Cardiac septum (tissue), 1 donor: ENCODE measurements at regions of chr19 and their contacts with region 1.

Region 1: DNA sequence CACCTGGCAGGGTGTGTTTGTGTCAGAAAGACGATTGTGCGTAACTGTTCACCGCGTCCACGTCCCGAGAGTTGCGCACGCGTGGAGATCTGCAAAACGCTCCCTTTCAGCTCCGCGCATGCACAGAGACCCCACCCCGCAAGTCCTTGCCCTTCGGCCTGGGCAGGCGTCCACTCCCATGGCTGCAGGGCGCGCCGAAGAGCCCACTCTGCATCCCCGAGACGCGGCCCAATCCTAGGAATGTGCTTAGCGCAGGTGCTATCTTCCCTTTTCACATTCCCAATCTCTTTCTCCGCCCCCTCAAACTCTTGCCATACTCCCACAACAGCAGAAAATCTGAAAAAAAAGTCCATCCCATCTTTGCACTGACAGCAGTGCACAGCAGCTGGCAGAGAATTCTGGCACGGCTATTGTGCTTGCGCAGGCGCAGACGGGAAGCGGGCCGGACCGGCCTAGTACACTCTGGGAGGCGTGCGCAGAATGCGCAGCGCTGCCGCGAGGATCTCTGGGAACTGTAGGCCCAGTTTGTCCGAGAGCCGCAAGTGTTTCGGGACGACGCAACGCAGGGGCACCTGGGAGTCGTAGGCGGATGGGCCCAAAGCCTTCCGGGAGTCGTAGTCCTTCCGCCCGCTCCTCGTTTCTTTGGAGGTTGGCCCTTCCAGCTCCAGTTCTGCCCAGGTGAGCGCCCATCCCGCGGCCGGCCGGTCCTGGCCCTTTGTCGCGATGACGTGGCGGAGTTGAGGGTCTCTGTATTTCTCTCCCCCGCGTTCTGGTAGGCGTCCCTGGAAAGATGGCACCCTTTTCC is 23.1 kb downstream of the ZNF175 start:
- DNase-seq: peak; percentile 100

Region 2: DNA sequence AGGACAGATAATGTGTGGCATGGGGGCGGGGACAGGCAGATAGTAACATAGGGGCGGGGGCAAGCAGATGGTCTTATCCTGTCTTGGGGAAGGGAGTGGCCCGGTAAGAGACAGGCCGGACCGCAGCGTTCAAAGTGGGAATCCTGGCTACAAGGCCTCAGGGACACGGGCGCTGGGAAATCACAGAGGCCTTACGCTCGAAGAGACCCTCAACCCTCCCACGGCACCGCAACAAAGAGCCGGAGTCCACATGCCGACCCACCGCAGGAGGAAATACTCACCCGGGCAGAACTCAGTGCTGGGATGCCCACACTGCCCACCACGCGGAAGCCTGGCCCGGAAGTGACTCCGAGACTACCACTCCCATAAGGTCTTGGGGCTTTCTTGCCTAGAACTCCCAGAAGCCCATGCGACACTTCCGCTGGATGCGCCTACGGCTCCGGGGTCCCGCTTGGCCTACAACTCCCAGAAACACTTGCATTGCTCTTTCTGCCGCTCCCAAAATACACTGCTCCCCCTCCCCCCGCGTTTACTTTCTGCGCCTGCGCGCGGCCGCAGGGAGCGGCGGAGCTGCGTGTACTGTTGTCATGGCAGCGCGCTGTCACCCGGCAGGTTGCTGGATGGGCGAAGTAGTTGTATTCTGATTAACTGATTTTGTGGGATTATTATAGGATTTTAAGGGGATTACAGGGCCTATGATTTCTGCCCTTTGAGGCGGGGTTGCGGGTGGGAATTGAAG is 485.9 kb before region 1 on chr19 and contains the start of gene CTU1:
- intact Hi-C with region 1: loop called (anchors 10 kb)
- DNase-seq: peak; percentile 100
- total RNA-seq, gene CTU1: 4.2 TPM

Region 3: DNA sequence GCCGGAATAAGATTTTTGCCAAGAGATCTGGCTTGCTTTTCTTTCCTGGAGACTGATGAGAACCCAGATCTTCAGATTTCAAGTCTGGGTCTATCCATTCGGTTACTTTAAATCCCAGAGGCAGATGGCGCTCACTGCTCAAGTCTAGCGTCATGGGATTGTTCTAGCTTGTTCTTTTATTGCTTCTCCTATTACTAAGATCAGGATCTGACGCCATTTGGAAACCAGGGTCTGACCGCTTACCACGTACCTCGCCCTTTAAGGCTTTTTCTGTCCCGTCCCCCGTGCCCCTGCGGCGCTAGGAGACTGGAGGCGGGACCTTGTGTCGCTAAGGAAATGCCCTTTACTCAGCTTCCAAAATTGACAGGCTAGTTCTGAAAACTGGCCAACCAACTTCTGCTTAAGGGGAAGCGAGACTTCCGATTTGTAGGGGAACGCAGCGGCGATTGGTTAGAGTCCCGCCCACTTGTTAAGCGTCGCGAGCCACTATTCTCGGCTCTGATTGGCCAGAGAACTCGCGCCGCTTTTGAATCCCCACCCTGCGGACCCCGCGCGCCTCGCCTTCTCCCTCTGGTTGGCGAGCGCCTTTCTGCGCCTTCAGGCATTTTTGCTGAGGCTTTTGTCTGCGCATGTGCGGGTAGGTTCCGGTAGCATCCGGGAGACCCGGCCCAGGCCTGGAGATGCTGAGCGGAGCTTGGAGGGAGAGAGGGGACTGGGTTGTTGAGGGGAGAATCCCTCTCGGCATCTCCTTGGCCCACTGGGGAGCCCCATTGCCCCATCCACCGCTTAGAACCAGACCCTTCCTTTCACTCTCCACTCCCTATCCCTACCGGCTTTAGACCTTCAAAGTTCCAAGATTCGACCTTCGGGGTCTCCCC is 200.0 kb before region 1 on chr19:
- intact Hi-C with region 1: no loop called
- DNase-seq: peak; percentile 95

Region 4: GRCh38 chr19:51570962-51571575 is 23.1 kb before region 1 on chr19 and contains the start of gene ZNF175:
- intact Hi-C with region 1: loop called (anchors 1 kb)
- DNase-seq: peak; percentile 94
- total RNA-seq, gene ZNF175: 7.8 TPM